ENCODE measurements at regions of chr1 and their contacts with region 1.

Region 1: DNA sequence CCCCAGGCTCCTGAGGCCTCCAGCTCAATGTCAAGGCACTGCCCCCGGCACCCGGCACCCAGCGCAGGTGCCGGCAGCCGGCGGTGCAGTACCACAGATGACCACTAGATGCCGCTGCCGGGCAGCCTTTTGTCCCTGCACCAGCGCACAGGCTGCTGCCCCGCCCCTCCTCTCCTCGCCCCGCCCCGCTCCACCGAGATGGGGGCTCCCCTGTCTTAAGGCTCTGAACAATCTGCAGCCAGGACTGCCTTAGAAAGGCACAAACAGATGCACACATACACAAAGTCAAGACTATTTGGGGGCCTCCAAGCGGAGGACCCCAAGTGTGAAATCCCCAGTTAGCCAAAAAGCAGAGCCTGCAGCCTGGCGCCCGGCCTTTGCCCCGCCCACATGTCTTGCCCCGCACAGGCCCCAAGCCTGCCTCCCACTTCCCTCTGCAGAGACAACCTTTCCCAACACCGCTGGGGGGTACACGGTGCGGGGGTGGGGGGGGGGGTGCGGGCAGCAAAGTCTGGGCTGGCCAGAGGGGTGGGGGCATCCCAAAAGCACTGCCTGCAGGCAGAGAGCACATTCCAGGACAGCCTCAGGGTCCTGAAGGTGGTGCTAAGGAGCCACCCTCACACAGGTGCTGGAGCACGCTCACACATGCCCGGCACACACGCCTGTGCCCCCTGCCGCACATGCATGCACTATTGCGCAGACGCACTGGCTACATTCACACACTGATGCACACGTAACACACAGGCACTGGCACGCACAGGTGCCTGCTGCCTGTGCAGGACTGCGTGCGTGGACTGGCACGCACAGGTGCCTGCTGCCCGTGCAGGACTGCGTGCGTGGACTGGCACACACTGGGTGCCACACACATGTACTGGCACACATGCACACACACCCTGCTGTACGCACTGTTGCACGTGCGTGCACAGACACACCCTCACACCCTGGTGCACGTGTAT is 37.1 kb downstream of the ARHGEF16 start:
- DNase-seq: peak; percentile 73 to 83
- H3K4me3 ChIP-seq: no peak overlapping the region
- H3K27ac ChIP-seq: no peak overlapping the region
- H3K4me1 ChIP-seq: no peaks in the 10 kb centered on the region
- H3K27me3 ChIP-seq: no peaks in the 10 kb centered on the region
- CTCF ChIP-seq: peak; percentile 96 to 100 (median 98)
- POLR2A ChIP-seq: no peak

Region 2: DNA sequence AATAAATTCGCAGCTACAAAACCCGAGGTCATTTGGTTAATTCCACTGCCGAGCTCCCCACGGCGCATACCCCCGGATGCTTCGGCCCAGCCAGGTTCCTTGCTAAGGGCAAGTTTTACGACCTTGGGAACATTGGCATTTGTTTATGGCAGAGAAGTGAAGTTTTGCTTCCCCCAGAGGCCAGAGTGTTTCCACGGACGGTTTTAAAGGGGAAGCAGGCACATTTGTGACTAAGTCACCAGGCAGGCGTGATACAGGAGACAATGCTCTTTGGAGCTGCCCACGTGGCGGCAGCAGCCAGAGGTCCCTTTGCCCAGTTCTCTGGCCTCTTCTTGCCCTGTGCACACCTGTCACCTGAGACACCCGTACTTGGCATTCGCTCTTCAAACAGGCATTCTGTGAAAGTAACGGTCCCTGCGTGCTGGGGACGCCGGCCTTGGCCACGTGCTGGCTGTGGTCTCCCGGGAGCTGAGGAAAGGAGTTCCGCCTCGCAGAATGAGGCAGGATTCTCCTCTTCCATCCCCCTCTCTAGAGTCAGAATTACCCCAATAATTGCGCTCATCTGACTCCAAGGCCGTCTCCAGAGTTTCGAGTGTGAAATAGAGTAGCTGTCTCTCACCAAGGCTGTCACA is 284.2 kb before region 1 on chr1:
- intact Hi-C with region 1: no loop called
- DNase-seq: no peak
- H3K4me3 ChIP-seq: no peak overlapping the region
- H3K27ac ChIP-seq: no peak overlapping the region
- H3K4me1 ChIP-seq: no peaks in the 10 kb centered on the region
- H3K27me3 ChIP-seq: no peaks in the 10 kb centered on the region
- CTCF ChIP-seq: no peak
- POLR2A ChIP-seq: no peak

Region 3: DNA sequence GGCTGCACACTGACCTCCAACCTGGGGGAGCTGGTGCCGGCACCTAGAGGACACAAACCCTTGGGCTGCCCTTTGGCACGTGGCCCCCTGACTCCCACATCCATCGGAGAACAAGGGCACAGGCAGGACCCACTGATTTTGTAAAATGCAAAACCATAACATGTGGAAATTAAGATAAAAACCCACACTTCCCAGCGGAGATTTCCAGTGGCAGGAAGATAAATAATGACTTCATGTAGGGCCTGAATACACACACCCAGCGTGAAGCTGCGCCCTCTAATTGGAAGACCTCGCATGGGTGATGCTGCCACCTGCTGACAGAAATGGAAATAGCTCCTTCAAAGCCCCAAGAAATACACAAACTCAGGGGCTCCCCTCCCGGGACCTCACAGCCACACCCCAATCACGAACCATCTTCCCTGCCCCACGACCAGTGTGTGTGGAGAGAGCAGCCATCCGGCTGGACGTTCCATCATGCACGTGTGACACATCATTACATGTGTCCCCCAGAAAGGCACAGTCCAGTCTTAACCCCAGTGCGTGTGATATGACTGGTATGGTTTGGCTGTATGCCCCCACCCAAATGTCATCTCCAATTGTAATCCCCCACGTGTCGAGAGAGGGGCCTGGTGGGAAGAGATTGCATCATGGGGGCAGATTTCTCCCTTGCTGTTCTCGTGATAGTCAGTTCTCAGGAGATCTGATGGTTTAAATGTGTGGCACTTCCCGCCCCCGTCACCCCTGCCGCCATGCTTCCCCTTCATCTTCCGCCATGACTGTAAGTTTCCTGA is 127.5 kb after region 1 on chr1:
- intact Hi-C with region 1: loop called (anchors 5 kb)
- DNase-seq: peak; percentile 67 to 76
- H3K4me3 ChIP-seq: no peak overlapping the region
- H3K27ac ChIP-seq: no peak overlapping the region
- H3K4me1 ChIP-seq: peaks cover 0 to 7% of the 10 kb centered on the region in 2 donors
- H3K27me3 ChIP-seq: no peaks in the 10 kb centered on the region
- CTCF ChIP-seq: peak; percentile 82 to 90 (median 89)
- POLR2A ChIP-seq: no peak

Measured in uterus (tissue), 4 donors.